Naive thymus-derived CD8-positive, alpha-beta T cell (primary cell): ENCODE measurements at regions of chr17 and their contacts with region 1.

Region 1: GRCh38 chr17:80815151-80815681 is 176.4 kb upstream of the CHMP6 start:
- DNase-seq: peak in 1 of 10 donors; percentile 37
- ATAC-seq: no peak
- H3K4me3 Mint-ChIP-seq: no peak overlapping the region
- H3K27ac Mint-ChIP-seq: peak overlapping the region in 1 of 10 donors; percentile 8
- H3K4me1 Mint-ChIP-seq: peaks cover 27 to 66% (median 50%) of the 10 kb centered on the region in 4 donors
- H3K27me3 Mint-ChIP-seq: no peaks in the 10 kb centered on the region

Region 2: GRCh38 chr17:80637048-80637781 is 178.0 kb before region 1 on chr17:
- POLR2A ChIA-PET with region 1: no interaction called
- DNase-seq: no peak
- ATAC-seq: peak; percentile 53 to 61
- H3K4me3 Mint-ChIP-seq: peak overlapping the region in 5 of 10 donors; percentile 62 to 80 (median 65)
- H3K27ac Mint-ChIP-seq: peak overlapping the region in 6 of 10 donors; percentile 72 to 94 (median 90)
- H3K4me1 Mint-ChIP-seq: peaks cover 20 to 35% (median 32%) of the 10 kb centered on the region in 4 donors
- H3K27me3 Mint-ChIP-seq: no peaks in the 10 kb centered on the region

Region 3: GRCh38 chr17:80832888-80833583 is 17.8 kb after region 1 on chr17:
- POLR2A ChIA-PET with region 1: interaction called, 11 read pairs
- DNase-seq: peak; percentile 41 to 81 (median 64)
- ATAC-seq: peak; percentile 91
- H3K4me3 Mint-ChIP-seq: peak overlapping the region; percentile 74 to 93 (median 88)
- H3K27ac Mint-ChIP-seq: peak overlapping the region; percentile 91 to 97 (median 94)
- H3K4me1 Mint-ChIP-seq: peaks cover 11 to 43% (median 33%) of the 10 kb centered on the region in 4 donors
- H3K27me3 Mint-ChIP-seq: no peaks in the 10 kb centered on the region